ENCODE measurements at regions of chr17 and their contacts with region 1.

Region 1: GRCh38 chr17:15502369-15503112 is 35.1 kb upstream of the CDRT4 start:
- DNase-seq: peak; percentile 93 to 97 (median 97)
- ATAC-seq: peak; percentile 94
- H3K4me3 ChIP-seq: peak overlapping the region; percentile 30
- H3K27ac ChIP-seq: peak overlapping the region; percentile 89
- H3K4me1 ChIP-seq: peaks cover 6% of the 10 kb centered on the region
- H3K27me3 ChIP-seq: no peaks in the 10 kb centered on the region

Region 2: GRCh38 chr17:15409721-15410250 is 92.8 kb before region 1 on chr17:
- intact Hi-C with region 1: loop called in 1 of 4 experiments (anchors 10 kb)
- DNase-seq: peak; percentile 70 to 87 (median 72)
- ATAC-seq: peak; percentile 85 to 88
- H3K4me3 ChIP-seq: no peak overlapping the region
- H3K27ac ChIP-seq: peak overlapping the region; percentile 70
- H3K4me1 ChIP-seq: no peaks in the 10 kb centered on the region
- H3K27me3 ChIP-seq: no peaks in the 10 kb centered on the region

Region 3: DNA sequence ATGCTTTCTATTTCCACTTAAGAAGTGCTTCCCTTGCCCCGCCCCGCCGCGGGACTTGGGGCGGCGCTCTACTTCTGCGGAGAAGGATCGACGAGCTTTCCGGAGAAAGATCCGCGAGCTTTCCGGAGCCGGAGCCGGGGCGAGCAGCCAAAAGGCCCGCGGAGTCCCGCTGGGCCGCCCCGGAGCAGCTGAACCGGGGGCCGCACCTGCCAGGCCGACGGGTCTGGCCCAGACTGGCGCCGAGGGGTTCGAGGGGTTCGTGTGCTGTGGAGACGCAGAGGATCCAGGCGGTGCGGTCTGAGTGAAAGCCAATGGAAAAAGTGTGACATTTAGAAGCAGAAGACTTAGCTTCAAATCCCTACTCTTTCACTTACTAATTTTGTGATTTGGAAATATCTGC is 280.3 kb after region 1 on chr17:
- intact Hi-C with region 1: no loop called
- DNase-seq: peak; percentile 72 to 91 (median 90)
- ATAC-seq: peak; percentile 69 to 79
- H3K4me3 ChIP-seq: peak overlapping the region; percentile 81
- H3K27ac ChIP-seq: peak overlapping the region; percentile 95
- H3K4me1 ChIP-seq: peaks cover 2% of the 10 kb centered on the region
- H3K27me3 ChIP-seq: no peaks in the 10 kb centered on the region

Measured in right cardiac atrium (tissue), 5 donors.